Right ventricle myocardium inferior (tissue), 1 donor: ENCODE measurements at regions of chr16 and their contacts with region 1.

Region 1: GRCh38 chr16:82626791-82627261 is at the start of gene CDH13:
- DNase-seq: peak; percentile 77
- ATAC-seq: peak; percentile 61
- total RNA-seq, gene CDH13: 173 TPM

Region 2: DNA sequence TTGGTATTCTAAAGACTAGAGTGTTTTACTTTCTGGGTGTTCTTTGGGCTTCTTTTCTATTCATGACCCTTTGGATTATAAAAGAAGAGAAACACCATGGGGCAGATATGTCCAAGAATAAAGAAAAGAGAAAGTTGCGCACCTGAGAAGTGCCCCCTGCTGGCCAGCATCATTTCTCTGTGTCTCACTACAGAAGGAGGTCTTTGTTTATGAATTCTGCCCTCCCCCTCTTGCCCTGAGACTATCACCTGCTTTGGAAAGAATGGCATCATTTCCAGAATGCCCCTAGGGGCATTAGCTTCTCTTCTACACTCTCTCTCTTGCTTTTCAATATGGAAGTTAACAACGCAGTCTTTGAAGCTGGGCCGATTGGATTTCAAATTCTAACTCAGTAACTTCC is 44.9 kb after region 1 on chr16:
- intact Hi-C with region 1: no loop called
- DNase-seq: no peak
- ATAC-seq: no peak

Region 3: DNA sequence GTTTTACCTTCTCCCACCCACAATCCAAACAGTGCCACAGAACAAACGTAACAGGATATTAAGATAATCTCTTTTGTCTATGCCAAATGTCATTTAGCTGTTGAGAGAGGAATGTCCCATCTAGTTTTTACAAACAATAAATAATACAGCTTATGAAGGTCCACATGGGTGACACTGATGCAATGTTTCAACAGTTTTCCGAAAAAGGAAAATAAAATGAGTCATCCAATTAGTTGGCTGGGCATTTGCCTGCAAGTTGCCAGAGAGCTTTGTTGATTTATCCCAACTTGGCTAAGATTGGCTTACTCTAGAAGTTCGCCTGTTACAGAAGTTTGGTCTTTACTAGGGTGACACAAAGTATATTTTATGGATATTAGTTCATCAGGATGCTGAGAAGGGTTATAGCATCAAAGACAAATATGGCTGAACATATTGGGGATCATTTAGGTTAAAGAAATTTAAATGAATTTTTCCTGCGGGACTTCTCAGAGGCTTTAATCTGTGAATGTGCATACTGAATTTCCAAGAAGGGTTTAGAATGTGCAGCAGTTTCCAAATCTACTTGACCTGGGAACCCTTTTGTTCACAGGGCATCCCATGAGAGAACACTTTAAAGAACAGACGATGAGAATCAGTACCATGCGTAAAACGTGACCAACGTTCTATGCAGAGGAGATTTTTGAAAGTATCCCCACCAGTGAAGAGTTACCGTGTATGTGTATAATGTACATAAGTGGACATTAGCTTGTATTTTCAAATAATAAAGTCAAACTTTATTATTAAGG is 73.1 kb after region 1 on chr16:
- intact Hi-C with region 1: loop called (anchors 2 kb)
- DNase-seq: no peak
- ATAC-seq: peak; percentile 78

Region 4: GRCh38 chr16:82715833-82716232 is 89.0 kb after region 1 on chr16:
- intact Hi-C with region 1: loop called (anchors 5 kb)
- DNase-seq: peak; percentile 67
- ATAC-seq: peak; percentile 92

Region 5: DNA sequence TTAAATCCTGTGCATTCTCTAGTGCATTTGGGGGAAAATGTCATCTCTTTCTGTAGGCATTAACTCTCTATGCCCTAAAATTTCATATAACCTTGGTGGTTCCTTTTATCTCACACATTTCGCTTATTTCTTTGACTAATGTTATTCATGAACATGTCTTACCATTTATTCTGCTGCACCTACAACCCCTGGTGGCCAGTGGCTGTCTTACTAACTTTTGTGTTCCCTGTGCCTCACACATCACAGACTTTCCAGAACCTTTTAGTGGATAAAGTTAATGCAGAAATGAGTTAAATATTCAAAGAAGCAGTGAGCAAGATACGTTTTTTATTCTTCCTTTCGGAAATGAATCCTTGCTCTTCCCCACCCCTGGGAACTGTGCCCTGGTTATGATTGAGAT is 111.9 kb after region 1 on chr16:
- intact Hi-C with region 1: loop called (anchors 5 kb)
- DNase-seq: no peak
- ATAC-seq: no peak

Region 6: GRCh38 chr16:82761236-82761635 is 134.4 kb after region 1 on chr16:
- intact Hi-C with region 1: loop called (anchors 5 kb)
- DNase-seq: peak; percentile 83
- ATAC-seq: peak; percentile 85

Region 7: DNA sequence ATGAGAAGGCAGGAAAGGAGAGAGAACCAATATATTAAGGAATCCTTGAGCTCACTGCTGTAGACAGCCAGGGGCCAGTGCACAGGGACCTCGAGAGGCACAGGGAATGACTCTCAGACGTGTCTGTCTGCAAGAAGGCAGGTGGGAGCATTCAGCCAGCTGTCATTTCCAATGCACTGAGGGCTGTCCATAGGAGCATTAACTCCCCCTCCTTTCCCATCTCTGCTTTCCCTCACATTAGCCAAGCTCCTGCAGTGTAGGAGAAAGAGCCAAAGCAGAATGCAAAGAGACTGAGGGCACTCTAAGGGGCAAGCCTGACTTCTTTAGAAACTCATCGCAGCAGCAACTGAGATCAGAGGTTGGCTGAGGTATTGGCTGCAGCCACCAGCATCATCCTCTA is 218.3 kb after region 1 on chr16:
- intact Hi-C with region 1: loop called (anchors 5 kb)
- DNase-seq: no peak
- ATAC-seq: no peak

Region 8: GRCh38 chr16:83068686-83069085 is 441.9 kb after region 1 on chr16:
- intact Hi-C with region 1: loop called (anchors 5 kb)
- DNase-seq: no peak
- ATAC-seq: no peak